ENCODE measurements at regions of chr17 and their contacts with region 1.

Region 1: GRCh38 chr17:77140166-77140878 is 447 bp upstream of the SEC14L1 start:
- DNase-seq: peak; percentile 100
- ATAC-seq: peak; percentile 79
- H3K4me3 Mint-ChIP-seq: peak overlapping the region; percentile 68
- H3K27ac Mint-ChIP-seq: peak overlapping the region; percentile 93
- H3K4me1 Mint-ChIP-seq: peaks cover 51% of the 10 kb centered on the region
- H3K27me3 Mint-ChIP-seq: no peaks in the 10 kb centered on the region

Region 2: GRCh38 chr17:76726231-76726775 is 414.0 kb before region 1 on chr17 and contains the start of gene JMJD6:
- CTCF ChIA-PET with region 1: no interaction called
- POLR2A ChIA-PET with region 1: no interaction called
- intact Hi-C with region 1: loop called in 1 of 2 experiments (anchors 1 kb)
- DNase-seq: peak; percentile 97
- ATAC-seq: peak; percentile 87
- H3K4me3 Mint-ChIP-seq: peak within 1 kb of the TSS; percentile 97
- H3K27ac Mint-ChIP-seq: peak within 1 kb of the TSS; percentile 98
- H3K4me1 Mint-ChIP-seq: peaks cover 54% of the 10 kb centered on the region
- H3K27me3 Mint-ChIP-seq: no peaks in the 10 kb centered on the region
- total RNA-seq, gene JMJD6: 51.3 to 65.5 TPM

Region 3: GRCh38 chr17:76997981-76998531 is 142.3 kb before region 1 on chr17:
- CTCF ChIA-PET with region 1: no interaction called
- POLR2A ChIA-PET with region 1: no interaction called
- intact Hi-C with region 1: loop called in 1 of 2 experiments (anchors 1 kb)
- DNase-seq: peak; percentile 69
- ATAC-seq: peak; percentile 91
- H3K4me3 Mint-ChIP-seq: peak overlapping the region; percentile 34
- H3K27ac Mint-ChIP-seq: peak overlapping the region; percentile 91
- H3K4me1 Mint-ChIP-seq: peaks cover 48% of the 10 kb centered on the region
- H3K27me3 Mint-ChIP-seq: no peaks in the 10 kb centered on the region

Region 4: DNA sequence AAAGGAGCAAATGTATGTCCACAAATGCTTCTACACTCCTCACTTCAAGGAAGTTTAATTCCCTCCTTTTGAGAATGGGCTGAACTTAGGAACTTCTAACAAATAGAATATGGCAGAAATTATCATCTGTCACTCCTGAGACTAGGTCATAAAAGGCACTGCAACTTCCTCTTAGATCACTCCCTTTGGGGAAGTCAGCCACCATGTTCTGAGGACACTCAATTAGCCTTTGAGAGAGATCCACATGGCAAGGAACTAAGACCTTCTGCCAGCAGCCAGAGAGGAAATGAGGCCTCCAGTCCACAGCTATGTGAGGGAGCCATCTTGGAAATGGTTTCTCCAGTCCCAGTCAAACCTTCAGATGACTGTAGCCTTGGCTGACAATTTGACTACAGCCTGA is 113.1 kb before region 1 on chr17:
- CTCF ChIA-PET with region 1: no interaction called
- POLR2A ChIA-PET with region 1: no interaction called
- intact Hi-C with region 1: no loop called
- DNase-seq: no peak
- ATAC-seq: no peak
- H3K4me3 Mint-ChIP-seq: no peak overlapping the region
- H3K27ac Mint-ChIP-seq: no peak overlapping the region
- H3K4me1 Mint-ChIP-seq: no peaks in the 10 kb centered on the region
- H3K27me3 Mint-ChIP-seq: no peaks in the 10 kb centered on the region

Region 5: DNA sequence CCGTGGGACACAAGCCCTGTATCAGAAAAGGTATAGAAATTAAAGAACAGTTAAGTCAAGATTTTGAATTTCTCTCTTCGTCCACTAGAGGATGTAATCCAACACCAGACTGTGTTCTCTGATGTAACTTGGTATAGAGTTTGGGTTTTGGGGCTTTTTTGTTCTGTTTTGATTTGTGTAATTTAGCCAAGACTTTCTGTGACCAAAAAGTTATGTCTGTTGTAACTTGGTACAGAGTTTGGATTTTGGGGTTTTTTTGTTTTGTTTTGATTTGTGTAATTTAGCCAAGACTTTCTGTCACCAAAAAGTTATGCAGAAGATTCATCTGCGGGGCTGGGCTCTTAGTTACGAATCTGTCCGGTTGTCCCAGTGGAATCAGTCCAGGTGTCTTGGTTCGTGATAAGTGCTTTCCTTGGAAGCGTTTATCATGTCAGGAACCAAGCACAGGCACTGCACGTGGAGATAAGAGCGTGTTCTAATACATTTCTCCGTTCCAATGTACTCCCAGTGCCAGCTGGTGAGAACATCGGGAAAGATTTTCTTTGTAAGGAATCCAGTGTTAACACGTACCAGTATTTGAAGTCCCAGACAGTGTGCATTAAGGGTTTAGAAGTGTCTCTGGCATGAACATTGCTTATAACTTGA is 43.6 kb before region 1 on chr17:
- CTCF ChIA-PET with region 1: no interaction called
- POLR2A ChIA-PET with region 1: interaction called, 3 read pairs
- intact Hi-C with region 1: loop called in 1 of 2 experiments (anchors 2 kb)
- DNase-seq: no peak
- ATAC-seq: peak; percentile 65
- H3K4me3 Mint-ChIP-seq: no peak overlapping the region
- H3K27ac Mint-ChIP-seq: peak overlapping the region; percentile 86
- H3K4me1 Mint-ChIP-seq: peaks cover 45% of the 10 kb centered on the region
- H3K27me3 Mint-ChIP-seq: no peaks in the 10 kb centered on the region

Region 6: DNA sequence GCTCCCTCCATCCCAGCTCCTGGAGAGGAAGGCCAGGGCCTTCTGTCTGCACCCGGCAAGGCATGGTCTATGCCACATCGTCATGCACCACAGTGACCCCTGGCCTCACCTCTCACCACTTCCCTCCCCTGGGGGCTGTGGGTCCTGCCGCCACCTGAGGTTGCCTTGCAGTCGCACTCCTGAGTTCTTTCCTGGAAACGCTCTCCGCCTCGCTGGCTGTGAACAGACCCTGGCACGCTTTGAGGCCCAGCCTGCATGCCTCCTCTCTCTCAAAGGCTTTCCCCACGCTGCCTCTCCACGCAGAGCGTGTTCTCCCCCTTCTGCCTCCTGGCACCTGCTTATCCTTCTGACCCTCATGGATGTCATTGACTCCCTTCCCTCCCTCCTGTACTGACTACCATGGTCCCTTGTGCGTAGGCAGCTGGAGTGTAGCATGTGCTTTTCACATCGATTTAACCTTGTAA is 45.9 kb after region 1 on chr17:
- CTCF ChIA-PET with region 1: no interaction called
- POLR2A ChIA-PET with region 1: interaction called, 4 read pairs
- intact Hi-C with region 1: loop called (anchors 2 to 5 kb)
- DNase-seq: peak; percentile 51
- ATAC-seq: peak; percentile 18
- H3K4me3 Mint-ChIP-seq: no peak overlapping the region
- H3K27ac Mint-ChIP-seq: no peak overlapping the region
- H3K4me1 Mint-ChIP-seq: peaks cover 24% of the 10 kb centered on the region
- H3K27me3 Mint-ChIP-seq: no peaks in the 10 kb centered on the region

Region 7: GRCh38 chr17:77247048-77247541 is 106.8 kb after region 1 on chr17:
- CTCF ChIA-PET with region 1: no interaction called
- POLR2A ChIA-PET with region 1: no interaction called
- intact Hi-C with region 1: loop called in 1 of 2 experiments (anchors 2 kb)
- DNase-seq: peak; percentile 93
- ATAC-seq: peak; percentile 95
- H3K4me3 Mint-ChIP-seq: peak overlapping the region; percentile 32
- H3K27ac Mint-ChIP-seq: no peak overlapping the region
- H3K4me1 Mint-ChIP-seq: peaks cover 6% of the 10 kb centered on the region
- H3K27me3 Mint-ChIP-seq: peaks cover 16% of the 10 kb centered on the region

Region 8: DNA sequence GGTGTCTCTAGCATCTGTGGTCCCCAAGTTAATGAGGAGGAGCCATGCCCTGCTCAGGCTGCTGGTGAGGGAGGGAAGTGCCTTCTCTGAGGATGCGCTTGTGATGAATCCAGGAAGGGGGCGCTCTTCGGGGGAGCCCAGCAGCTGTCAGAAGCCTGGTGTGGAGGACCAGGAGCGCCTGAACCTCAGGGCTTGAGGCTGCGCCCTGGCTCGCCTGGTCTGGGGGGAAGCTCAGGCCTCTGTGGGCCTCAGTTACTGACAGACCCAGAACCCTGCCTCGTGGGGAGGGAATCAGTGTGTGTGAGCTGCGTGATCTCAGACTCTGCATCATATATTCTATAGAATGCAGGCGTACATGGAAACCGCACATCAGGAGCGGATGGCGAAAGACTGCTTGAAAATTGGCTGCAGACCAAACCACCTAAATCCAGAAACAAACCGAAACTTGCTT is 126.6 kb after region 1 on chr17:
- CTCF ChIA-PET with region 1: no interaction called
- POLR2A ChIA-PET with region 1: no interaction called
- intact Hi-C with region 1: no loop called
- DNase-seq: peak; percentile 36
- ATAC-seq: no peak
- H3K4me3 Mint-ChIP-seq: no peak overlapping the region
- H3K27ac Mint-ChIP-seq: no peak overlapping the region
- H3K4me1 Mint-ChIP-seq: no peaks in the 10 kb centered on the region
- H3K27me3 Mint-ChIP-seq: no peaks in the 10 kb centered on the region

Region 9: GRCh38 chr17:77476931-77477877 is 336.9 kb after region 1 on chr17:
- CTCF ChIA-PET with region 1: no interaction called
- POLR2A ChIA-PET with region 1: interaction called, 3 read pairs
- intact Hi-C with region 1: loop called in 1 of 2 experiments (anchors 10 kb)
- DNase-seq: peak; percentile 74
- ATAC-seq: peak; percentile 33
- H3K4me3 Mint-ChIP-seq: peak overlapping the region; percentile 24
- H3K27ac Mint-ChIP-seq: peak overlapping the region; percentile 80
- H3K4me1 Mint-ChIP-seq: peaks cover 78% of the 10 kb centered on the region
- H3K27me3 Mint-ChIP-seq: no peaks in the 10 kb centered on the region

Measured in activated CD4-positive, alpha-beta T cell treated with anti-CD3 and anti-CD28 coated beads for 36 hours (primary cell).